Activated T-helper 2 cell treated with anti-CD3 and anti-CD28 coated beads, Interferon-gamma antibody, Interleukin-2, Interleukin-4, amounts not matched to agents 10 μg/mL and 5 μg/mL and 100 μg/mL, durations not matched to agents 14 hours and 24 hours and 36 hours (primary cell): ENCODE measurements at regions of chr6 and their contacts with region 1.

Region 1: GRCh38 chr6:135114355-135115145 is 59.9 kb upstream of the HBS1L start:
- DNase-seq: peak; percentile 45
- H3K4me3 Mint-ChIP-seq: peak overlapping the region; percentile 58
- H3K27ac Mint-ChIP-seq: peak overlapping the region; percentile 95
- H3K4me1 Mint-ChIP-seq: peaks cover 81% of the 10 kb centered on the region
- H3K27me3 Mint-ChIP-seq: no peaks in the 10 kb centered on the region

Region 2: DNA sequence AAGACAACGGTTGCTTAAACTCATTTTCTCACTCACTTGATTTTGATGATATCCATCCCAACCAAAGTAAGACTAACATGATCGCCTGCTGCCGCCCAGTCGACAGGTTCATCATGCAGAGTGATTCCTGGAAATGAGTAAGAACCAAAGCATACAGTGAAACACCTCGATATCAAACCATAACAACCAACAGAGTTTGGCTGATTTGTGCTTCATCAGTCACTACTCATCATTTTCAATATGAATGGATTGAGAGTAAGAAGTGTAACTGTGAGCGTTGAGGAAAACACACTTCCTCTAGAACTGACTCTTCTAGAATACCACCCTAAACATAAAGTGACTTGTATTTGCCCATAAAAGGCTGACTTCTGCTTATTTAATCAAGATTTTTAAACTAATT is 135.4 kb before region 1 on chr6:
- intact Hi-C with region 1: loop called (anchors 1 kb)
- DNase-seq: peak; percentile 55
- H3K4me3 Mint-ChIP-seq: peak overlapping the region; percentile 57
- H3K27ac Mint-ChIP-seq: peak overlapping the region; percentile 78
- H3K4me1 Mint-ChIP-seq: peaks cover 52% of the 10 kb centered on the region
- H3K27me3 Mint-ChIP-seq: no peaks in the 10 kb centered on the region

Region 3: DNA sequence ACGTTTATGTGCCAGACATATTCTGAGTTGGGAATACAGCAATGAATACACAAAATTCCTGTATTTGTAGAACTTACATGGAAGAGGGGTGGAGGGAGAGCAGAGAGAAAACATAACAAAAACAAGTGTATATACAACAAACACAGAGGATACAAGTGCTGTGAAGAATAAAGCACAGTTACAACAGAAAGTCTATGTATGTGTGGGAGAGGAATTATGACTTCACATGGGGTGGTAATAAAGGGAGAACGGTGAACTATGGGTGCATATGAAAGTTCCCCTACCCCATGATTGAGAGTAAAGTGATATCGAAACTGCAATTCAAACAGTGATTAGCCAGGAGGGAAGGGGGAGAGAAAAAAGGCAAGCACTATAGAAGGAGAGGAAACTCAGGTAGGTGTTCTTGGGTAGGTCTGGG is 84.5 kb before region 1 on chr6:
- intact Hi-C with region 1: loop called (anchors 1 kb)
- DNase-seq: no peak
- H3K4me3 Mint-ChIP-seq: peak overlapping the region; percentile 45
- H3K27ac Mint-ChIP-seq: peak overlapping the region; percentile 78
- H3K4me1 Mint-ChIP-seq: peaks cover 51% of the 10 kb centered on the region
- H3K27me3 Mint-ChIP-seq: no peaks in the 10 kb centered on the region

Region 4: GRCh38 chr6:135094403-135094848 is 20.1 kb before region 1 on chr6:
- intact Hi-C with region 1: loop called (anchors 1 kb)
- DNase-seq: no peak
- H3K4me3 Mint-ChIP-seq: peak overlapping the region; percentile 45
- H3K27ac Mint-ChIP-seq: peak overlapping the region; percentile 87
- H3K4me1 Mint-ChIP-seq: peaks cover 59% of the 10 kb centered on the region
- H3K27me3 Mint-ChIP-seq: no peaks in the 10 kb centered on the region

Region 5: GRCh38 chr6:135145063-135145800 is 30.7 kb after region 1 on chr6:
- intact Hi-C with region 1: loop called (anchors 1 kb)
- DNase-seq: no peak
- H3K4me3 Mint-ChIP-seq: peak overlapping the region; percentile 55
- H3K27ac Mint-ChIP-seq: peak overlapping the region; percentile 89
- H3K4me1 Mint-ChIP-seq: peaks cover 64% of the 10 kb centered on the region
- H3K27me3 Mint-ChIP-seq: no peaks in the 10 kb centered on the region

Region 6: GRCh38 chr6:135291288-135292116 is 177.0 kb after region 1 on chr6:
- intact Hi-C with region 1: loop called (anchors 10 kb)
- DNase-seq: no peak
- H3K4me3 Mint-ChIP-seq: no peak overlapping the region
- H3K27ac Mint-ChIP-seq: no peak overlapping the region
- H3K4me1 Mint-ChIP-seq: peaks cover 21% of the 10 kb centered on the region
- H3K27me3 Mint-ChIP-seq: no peaks in the 10 kb centered on the region